Activated B cell treated with CpG ODN at 0.5 μM for 24 hours (primary cell): ENCODE measurements at regions of chr15 and their contacts with region 1.

Region 1: DNA sequence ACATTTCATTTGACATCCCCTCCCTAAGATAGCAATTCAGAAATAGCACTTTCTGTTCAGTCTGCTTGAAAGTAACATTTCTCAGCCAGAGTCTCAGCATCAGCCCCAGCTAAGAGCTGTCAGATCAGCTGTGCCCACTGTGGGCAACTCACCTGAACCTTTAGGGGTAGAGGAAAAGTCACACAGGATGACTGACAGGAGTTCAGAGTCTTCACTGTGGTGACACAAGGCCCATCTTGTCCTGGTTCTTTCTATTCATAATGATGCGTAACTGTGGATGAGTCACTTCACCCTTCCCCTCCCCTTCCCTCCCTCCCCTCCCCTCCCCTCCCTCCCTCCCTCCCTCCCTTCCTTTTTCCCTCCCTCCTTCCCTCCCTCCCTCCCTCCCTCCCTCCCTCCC is 96.1 kb upstream of the RASGRP1 start:
- DNase-seq: no peak
- ATAC-seq: no peak
- H3K4me3 Mint-ChIP-seq: no peak overlapping the region
- H3K27ac Mint-ChIP-seq: no peak overlapping the region
- H3K4me1 Mint-ChIP-seq: peaks cover 22% of the 10 kb centered on the region
- H3K27me3 Mint-ChIP-seq: no peaks in the 10 kb centered on the region
- CTCF ChIP-seq: no peak

Region 2: DNA sequence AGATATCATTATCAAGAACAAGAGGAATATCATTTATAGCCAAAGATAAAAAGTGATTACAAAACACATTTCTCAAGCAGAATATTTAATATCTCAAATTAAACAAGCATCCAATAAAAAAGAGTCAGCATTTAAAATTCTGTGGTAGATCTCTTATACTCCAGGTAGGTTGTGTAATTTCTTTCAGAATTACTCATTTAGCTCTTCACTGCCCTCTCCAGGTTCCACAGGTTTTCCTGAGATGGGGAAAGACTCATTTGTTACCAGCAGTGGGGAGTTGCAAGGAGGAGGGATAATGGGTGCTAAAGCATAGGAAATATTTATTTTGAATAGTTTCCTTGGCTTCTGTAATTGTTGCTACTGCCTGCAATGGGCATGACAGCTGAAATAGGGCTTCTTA is 13.1 kb before region 1 on chr15:
- CTCF ChIA-PET with region 1: interaction called, 4 read pairs
- POLR2A ChIA-PET with region 1: no interaction called
- intact Hi-C with region 1: loop called (anchors 1 kb)
- DNase-seq: no peak
- ATAC-seq: no peak
- H3K4me3 Mint-ChIP-seq: no peak overlapping the region
- H3K27ac Mint-ChIP-seq: no peak overlapping the region
- H3K4me1 Mint-ChIP-seq: peaks cover 60% of the 10 kb centered on the region
- H3K27me3 Mint-ChIP-seq: no peaks in the 10 kb centered on the region
- CTCF ChIP-seq: no peak

Region 3: GRCh38 chr15:40398413-40398873 is 1737.7 kb after region 1 on chr15:
- CTCF ChIA-PET with region 1: no interaction called
- POLR2A ChIA-PET with region 1: interaction called, 11 read pairs
- intact Hi-C with region 1: no loop called
- DNase-seq: no peak
- ATAC-seq: peak; percentile 86
- H3K4me3 Mint-ChIP-seq: peak overlapping the region; percentile 42
- H3K27ac Mint-ChIP-seq: peak overlapping the region; percentile 38
- H3K4me1 Mint-ChIP-seq: peaks cover 18% of the 10 kb centered on the region
- H3K27me3 Mint-ChIP-seq: no peaks in the 10 kb centered on the region
- CTCF ChIP-seq: no peak